Heart left ventricle (tissue), 16 donors: ENCODE measurements at regions of chr19 and their contacts with region 1.

Region 1: DNA sequence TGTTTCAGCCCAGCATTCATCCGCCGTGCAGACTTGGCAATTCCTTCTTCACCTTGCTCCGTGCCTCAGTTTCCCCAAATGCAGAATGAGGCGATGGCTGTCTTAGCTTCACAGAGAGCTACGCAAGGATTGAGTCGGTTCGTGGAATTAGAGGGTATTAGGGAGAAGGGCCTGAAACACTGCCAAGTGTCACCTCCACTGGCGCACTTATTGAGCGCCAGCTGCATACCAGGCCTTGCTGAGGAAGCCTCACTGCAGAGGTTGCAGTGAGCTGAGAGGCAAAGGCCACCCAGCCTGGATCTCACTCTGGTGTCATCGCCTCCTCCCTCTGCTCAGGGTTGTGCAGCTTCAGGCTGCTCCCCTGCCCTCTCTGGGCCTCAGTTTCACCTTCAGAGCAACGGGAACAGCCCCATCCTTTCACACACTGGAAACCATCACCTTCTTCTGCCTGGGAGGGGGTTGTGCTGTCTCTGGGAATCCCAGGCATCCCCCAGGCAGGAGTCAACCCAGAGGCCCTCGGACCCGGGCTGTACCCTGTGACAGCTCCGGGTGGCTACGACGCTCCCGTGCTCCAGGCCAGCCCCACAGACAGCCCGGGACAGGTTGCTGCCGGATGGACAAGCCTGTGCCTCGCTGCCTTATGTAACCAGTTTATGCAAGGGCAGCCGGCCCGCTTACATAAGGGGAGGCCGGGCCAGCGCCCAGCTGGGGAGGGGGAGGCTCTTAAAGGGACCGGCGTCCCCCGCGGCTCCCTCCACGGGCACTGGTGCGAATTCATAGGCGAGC is 31.9 kb downstream of the NFIC start:
- DNase-seq: peak; percentile 77 to 90 (median 85)
- ATAC-seq: peak; percentile 72 to 91 (median 85)
- H3K4me3 ChIP-seq: peak overlapping the region in 10 of 12 donors; percentile 13 to 52 (median 39)
- H3K27ac ChIP-seq: peak overlapping the region; percentile 74 to 100 (median 94)
- H3K4me1 ChIP-seq: peaks cover 8 to 63% (median 39%) of the 10 kb centered on the region in 12 donors
- H3K27me3 ChIP-seq: no peaks in the 10 kb centered on the region
- CTCF ChIP-seq: no peak
- POLR2A ChIP-seq: peak in 1 of 2 donors; percentile 17

Region 2: DNA sequence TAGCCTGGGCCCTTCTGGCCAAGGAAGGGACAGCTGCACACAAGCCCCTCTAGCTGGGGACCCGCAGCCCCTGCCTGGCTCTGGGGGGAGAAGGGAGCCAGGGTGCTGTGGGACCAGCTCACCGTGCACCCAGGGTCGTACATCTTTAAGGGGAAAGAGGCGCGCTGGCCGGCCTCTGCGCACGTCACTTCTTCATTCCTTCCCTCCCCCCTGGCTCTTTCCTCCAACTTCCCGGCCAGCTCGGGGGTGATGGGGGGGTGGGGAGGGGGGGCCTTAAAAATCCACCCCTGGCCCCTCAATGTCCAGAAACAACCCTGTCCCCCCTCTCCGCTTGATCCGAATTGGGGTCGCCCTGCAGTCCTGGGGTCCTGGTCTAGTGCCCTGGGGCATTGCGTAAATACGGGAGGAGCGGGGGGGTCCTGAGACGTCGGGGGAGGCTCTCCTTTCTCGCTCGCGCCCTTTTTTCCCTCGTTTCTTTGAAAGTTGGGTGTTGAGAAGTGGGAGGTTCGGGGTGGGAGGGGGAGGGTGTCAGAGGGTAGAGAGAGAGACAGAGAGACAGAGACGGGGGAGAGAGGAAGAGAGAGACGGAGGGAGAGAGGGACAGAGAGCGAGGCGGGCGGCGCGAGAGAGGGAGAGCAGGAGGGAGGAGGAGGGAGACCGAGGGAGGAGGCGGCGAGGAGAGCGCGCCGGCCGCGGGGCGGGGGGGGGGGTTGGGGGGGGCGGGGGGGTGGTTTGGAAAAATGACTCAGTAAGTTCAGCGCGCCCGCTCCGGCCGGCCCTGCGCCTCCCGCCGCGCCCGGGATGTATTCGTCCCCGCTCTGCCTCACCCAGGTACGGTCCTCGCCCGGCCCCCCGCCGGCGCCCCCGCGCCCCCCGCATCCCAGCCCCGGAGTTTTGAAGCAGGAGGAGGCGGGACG is 32.2 kb before region 1 on chr19 and contains the start of gene NFIC:
- intact Hi-C with region 1: loop called in 4 of 10 experiments (anchors 2 to 5 kb)
- DNase-seq: peak; percentile 83 to 90 (median 87)
- ATAC-seq: peak; percentile 59 to 72 (median 72)
- H3K4me3 ChIP-seq: peak within 1 kb of the TSS; percentile 75 to 97 (median 82)
- H3K27ac ChIP-seq: peak within 1 kb of the TSS; percentile 94 to 100 (median 97)
- H3K4me1 ChIP-seq: peaks cover 6 to 82% (median 49%) of the 10 kb centered on the region in 12 donors
- H3K27me3 ChIP-seq: no peaks in the 10 kb centered on the region
- CTCF ChIP-seq: no peak
- POLR2A ChIP-seq: no peak
- total RNA-seq, gene NFIC: 107 to 267 (median 155) TPM

Region 3: DNA sequence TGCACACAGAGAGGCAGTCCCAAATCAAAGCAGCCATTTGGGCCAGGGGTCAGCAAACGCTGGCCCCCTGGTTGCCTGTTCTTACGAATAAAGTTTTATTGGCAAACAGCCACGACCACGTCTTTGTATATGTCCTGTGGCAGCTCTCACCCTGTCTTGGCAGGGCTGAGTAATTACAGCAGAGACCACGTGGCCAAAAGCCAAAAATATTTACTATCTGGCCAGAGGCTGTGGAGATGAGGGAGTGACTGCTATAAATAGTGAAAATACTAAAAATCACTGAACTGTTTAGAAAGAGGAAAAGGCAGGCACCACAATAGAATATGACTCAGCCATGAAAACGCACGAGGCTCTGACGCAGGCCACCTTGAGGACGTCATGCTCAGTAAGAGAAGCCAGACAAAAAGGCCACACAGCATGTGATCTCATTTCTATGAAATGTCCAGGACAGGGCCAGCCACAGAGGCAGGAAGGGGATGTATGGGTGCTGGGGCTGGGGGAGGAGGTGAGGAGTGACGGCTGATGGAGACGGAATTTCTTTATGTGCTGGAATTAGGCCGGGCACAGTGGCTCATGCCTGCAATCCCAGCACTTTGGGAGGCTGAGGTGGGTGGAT is 52.6 kb after region 1 on chr19:
- intact Hi-C with region 1: no loop called
- DNase-seq: peak in 4 of 5 donors; percentile 60 to 94 (median 78)
- ATAC-seq: peak; percentile 82 to 95 (median 94)
- H3K4me3 ChIP-seq: no peak overlapping the region
- H3K27ac ChIP-seq: peak overlapping the region; percentile 9 to 92 (median 85)
- H3K4me1 ChIP-seq: peaks cover 0 to 22% (median 11%) of the 10 kb centered on the region in 12 donors
- H3K27me3 ChIP-seq: no peaks in the 10 kb centered on the region
- CTCF ChIP-seq: no peak
- POLR2A ChIP-seq: no peak

Region 4: GRCh38 chr19:3463714-3464586 is 65.6 kb after region 1 on chr19:
- intact Hi-C with region 1: loop called in 1 of 10 experiments (anchors 2 kb)
- DNase-seq: no peak
- ATAC-seq: no peak
- H3K4me3 ChIP-seq: no peak overlapping the region
- H3K27ac ChIP-seq: peak overlapping the region in 3 of 12 donors; percentile 7 to 92 (median 41)
- H3K4me1 ChIP-seq: peaks cover 0 to 62% (median 26%) of the 10 kb centered on the region in 12 donors
- H3K27me3 ChIP-seq: no peaks in the 10 kb centered on the region
- CTCF ChIP-seq: no peak
- POLR2A ChIP-seq: no peak